Thyroid gland (tissue), 4 donors: ENCODE measurements at regions of chr2 and their contacts with region 1.

Region 1: GRCh38 chr2:118882709-118883210 is 35.3 kb upstream of the EN1 start:
- DNase-seq: peak; percentile 50 to 59
- H3K4me3 ChIP-seq: no peak overlapping the region
- H3K27ac ChIP-seq: no peak overlapping the region
- H3K4me1 ChIP-seq: peaks cover 0 to 4% of the 10 kb centered on the region in 2 donors
- H3K27me3 ChIP-seq: no peaks in the 10 kb centered on the region
- CTCF ChIP-seq: peak; percentile 26 to 74 (median 61)
- POLR2A ChIP-seq: no peak

Region 2: GRCh38 chr2:119283860-119284331 is 401.1 kb after region 1 on chr2:
- intact Hi-C with region 1: loop called (anchors 10 kb)
- DNase-seq: peak; percentile 90 to 95
- H3K4me3 ChIP-seq: no peak overlapping the region
- H3K27ac ChIP-seq: peak overlapping the region; percentile 14 to 70 (median 66)
- H3K4me1 ChIP-seq: peaks cover 6 to 15% of the 10 kb centered on the region in 2 donors
- H3K27me3 ChIP-seq: no peaks in the 10 kb centered on the region
- CTCF ChIP-seq: no peak
- POLR2A ChIP-seq: no peak